GM10248 (cell line): ENCODE measurements at regions of chr2 and their contacts with region 1.

Region 1: GRCh38 chr2:16756831-16757644 is 91.4 kb upstream of the CYRIA start:
- DNase-seq: peak; percentile 74
- CTCF ChIP-seq: peak; percentile 87

Region 2: GRCh38 chr2:16525265-16525887 is 231.7 kb before region 1 on chr2:
- CTCF ChIA-PET with region 1: interaction called, 28 read pairs
- POLR2A ChIA-PET with region 1: no interaction called
- DNase-seq: peak; percentile 44
- CTCF ChIP-seq: peak; percentile 55

Region 3: DNA sequence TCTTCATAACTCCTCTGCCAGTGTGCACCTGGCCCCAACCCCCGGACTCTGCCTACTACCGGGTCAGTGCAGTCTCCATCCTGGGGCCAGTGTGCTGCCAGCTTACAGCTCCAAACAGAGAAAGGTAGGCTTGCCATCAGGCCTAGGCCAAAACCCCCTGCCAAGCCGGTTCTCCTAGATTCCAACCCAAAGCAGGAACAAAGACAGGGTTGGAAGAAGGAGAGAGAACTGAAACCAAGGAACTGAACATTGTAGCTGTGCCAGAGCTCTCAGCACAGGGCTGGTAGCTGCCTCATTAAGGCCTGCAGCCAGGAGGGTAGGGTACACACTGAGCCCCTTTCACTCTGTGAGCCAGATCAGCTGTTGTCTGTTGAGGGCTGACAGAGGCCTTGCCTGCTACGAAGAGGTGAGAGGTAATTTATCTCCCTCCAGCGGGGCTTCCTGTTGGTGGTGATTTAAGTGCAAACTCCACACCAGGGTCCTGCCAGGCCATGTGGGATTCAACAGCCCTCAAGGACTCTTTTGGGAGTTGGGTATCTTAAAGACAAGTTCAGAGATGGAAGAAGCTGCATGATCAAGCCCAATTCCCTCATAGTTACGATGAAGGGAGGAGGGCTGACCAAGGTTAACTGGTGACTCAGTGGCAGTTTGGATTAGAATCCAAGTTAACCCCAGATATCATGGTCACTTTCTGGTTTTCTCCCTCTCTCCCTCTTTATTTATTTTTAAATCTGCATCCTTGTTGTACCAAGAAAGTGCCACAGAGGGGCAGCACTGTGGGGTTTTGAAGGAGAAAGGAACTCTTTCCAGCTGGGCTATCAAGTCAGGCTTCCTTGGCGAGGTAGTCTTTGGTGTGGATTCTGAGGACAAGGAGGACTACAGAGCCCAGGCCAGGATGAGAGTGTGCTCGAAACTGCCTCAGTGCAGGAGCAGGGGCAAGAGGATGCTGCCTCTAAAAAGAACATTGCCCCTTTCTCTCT is 139.5 kb before region 1 on chr2:
- CTCF ChIA-PET with region 1: interaction called, 123 read pairs
- POLR2A ChIA-PET with region 1: no interaction called
- DNase-seq: no peak
- CTCF ChIP-seq: no peak

Region 4: DNA sequence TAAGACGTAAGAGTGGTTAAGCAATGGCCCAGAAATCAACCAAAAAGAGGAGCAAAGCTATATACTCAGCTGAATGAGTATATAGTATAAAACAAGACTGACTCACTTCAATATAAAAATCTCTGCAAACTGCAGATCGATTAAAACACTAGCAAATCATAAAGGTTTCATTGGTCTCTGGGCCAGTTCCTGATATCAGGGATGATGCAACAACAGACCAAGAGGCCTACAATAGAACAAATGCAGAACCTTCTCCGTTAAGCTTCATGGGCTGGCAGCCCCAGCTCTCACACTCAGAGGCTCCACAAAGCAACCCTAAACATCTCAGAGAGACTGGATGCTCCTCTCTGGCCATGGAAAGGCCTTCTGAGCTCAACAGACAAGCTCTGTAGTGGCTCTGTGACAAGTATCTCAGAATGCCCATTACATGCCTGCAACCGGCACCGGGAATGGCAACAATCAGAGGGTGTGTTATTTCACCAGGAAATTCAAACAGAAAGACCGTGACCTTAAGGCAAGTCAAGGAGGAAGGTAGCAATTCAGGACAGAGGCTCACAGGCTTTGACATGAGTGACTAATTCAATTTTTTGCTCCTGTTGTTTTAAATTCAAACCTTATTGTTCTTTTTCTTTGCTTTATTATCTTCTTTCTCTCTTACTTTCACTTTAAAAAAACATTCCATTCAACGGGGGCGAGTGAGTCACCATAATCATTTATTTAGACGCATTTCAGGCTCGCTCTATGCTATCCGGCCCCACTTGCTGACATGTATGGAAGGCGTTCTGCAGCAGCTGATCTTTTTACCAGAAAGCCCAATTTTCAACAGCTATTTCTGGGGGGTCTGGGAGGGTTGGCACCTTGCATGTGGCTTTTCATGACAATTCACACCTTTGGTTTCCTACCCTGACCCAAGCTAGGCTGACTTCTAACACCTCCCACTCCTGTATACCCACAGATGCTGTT is 106.5 kb before region 1 on chr2:
- CTCF ChIA-PET with region 1: interaction called, 14 read pairs
- POLR2A ChIA-PET with region 1: no interaction called
- DNase-seq: no peak
- CTCF ChIP-seq: no peak

Region 5: DNA sequence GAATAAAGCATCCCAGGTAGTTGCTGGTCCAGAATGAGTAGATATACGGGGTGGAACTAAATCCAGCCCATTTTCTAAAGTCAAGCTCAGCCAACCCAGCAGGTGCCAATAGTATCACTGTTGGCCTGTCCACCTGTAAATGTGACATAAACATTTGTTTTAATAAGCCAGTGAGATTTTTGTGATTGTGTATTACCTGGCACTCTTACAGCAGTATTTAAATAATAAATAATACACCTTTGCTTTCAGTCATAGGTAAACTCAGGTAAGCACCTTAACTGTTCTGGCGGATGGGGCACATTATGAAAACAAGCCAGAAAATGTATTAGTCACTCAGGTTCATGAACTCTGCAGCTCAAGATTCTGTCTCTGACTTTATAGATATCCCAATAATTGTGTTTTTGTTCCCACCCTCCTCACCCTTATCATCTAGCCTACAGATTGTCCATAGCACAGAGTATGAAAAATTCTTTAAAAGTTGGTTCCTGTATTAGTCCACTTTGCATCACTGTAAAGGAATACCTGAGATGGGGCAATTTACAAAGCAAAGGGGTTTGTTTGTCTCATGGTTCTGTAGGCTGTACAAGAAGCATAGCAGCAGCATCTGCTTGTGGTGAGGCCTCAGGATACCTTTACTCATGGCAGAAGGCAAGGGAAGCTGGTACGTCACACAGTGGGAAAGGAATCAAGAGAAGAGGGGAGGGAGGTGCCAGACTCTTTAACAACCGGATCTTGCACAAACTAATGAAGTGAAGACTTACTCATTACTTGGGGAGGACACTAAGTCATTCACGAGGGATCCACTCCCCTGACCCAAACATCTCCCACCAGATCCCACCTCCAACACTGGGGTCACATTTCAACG is 18.4 kb before region 1 on chr2:
- CTCF ChIA-PET with region 1: interaction called, 33 read pairs
- POLR2A ChIA-PET with region 1: no interaction called
- DNase-seq: no peak
- CTCF ChIP-seq: no peak

Region 6: GRCh38 chr2:16767789-16768476 is 10.9 kb after region 1 on chr2:
- CTCF ChIA-PET with region 1: interaction called, 16 read pairs
- POLR2A ChIA-PET with region 1: no interaction called
- DNase-seq: no peak
- CTCF ChIP-seq: no peak